Calu3 (cell line): ENCODE measurements at regions of chr18 and their contacts with region 1.

Region 1: DNA sequence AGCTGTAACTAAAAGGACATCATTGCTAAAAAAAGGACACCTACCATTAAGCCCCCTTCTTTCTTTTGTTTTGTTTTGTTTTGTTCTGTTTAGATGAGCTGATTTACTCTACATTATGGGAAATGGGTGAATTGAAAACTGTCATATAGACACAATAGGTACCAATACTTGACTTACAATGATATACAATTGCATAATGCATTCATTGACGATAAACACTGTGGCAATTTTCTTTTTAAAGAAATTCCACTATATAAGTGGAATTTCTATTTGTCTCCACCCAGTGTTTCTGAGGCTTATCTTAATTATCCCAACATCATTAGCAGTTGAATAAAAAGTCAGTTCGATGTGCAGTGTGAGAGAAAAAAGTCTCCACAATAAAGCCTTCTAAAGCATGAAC is 282.1 kb downstream of the BCL2 start:
- DNase-seq: no peak
- H3K4me3 Mint-ChIP-seq: no peak overlapping the region
- H3K27ac Mint-ChIP-seq: no peak overlapping the region
- H3K4me1 Mint-ChIP-seq: peaks cover 20% of the 10 kb centered on the region
- H3K27me3 Mint-ChIP-seq: no peaks in the 10 kb centered on the region
- CTCF ChIP-seq: no peak

Region 2: GRCh38 chr18:63025251-63026090 is 12.0 kb before region 1 on chr18:
- CTCF ChIA-PET with region 1: interaction called, 11 read pairs
- intact Hi-C with region 1: no loop called
- DNase-seq: no peak
- H3K4me3 Mint-ChIP-seq: no peak overlapping the region
- H3K27ac Mint-ChIP-seq: no peak overlapping the region
- H3K4me1 Mint-ChIP-seq: no peaks in the 10 kb centered on the region
- H3K27me3 Mint-ChIP-seq: no peaks in the 10 kb centered on the region
- CTCF ChIP-seq: no peak